ENCODE measurements at regions of chr4 and their contacts with region 1.

Region 1: GRCh38 chr4:149584722-149585121 is 230.9 kb downstream of the IQCM start:
- DNase-seq: no peak
- ATAC-seq: no peak
- H3K4me3 ChIP-seq: no peak overlapping the region
- H3K27ac ChIP-seq: no peak overlapping the region
- H3K4me1 ChIP-seq: no peaks in the 10 kb centered on the region
- H3K27me3 ChIP-seq: no peaks in the 10 kb centered on the region
- CTCF ChIP-seq: no peak

Region 2: GRCh38 chr4:148044912-148045352 is 1539.8 kb before region 1 on chr4:
- CTCF ChIA-PET with region 1: interaction called, 11 read pairs
- POLR2A ChIA-PET with region 1: no interaction called
- in situ Hi-C with region 1: no loop called
- intact Hi-C with region 1: no loop called
- DNase-seq: no peak
- ATAC-seq: no peak
- H3K4me3 ChIP-seq: no peak overlapping the region
- H3K27ac ChIP-seq: no peak overlapping the region
- H3K4me1 ChIP-seq: no peaks in the 10 kb centered on the region
- H3K27me3 ChIP-seq: no peaks in the 10 kb centered on the region
- CTCF ChIP-seq: no peak

Measured in Panc1 (cell line).